Calu3 (cell line): ENCODE measurements at regions of chr2 and their contacts with region 1.

Region 1: DNA sequence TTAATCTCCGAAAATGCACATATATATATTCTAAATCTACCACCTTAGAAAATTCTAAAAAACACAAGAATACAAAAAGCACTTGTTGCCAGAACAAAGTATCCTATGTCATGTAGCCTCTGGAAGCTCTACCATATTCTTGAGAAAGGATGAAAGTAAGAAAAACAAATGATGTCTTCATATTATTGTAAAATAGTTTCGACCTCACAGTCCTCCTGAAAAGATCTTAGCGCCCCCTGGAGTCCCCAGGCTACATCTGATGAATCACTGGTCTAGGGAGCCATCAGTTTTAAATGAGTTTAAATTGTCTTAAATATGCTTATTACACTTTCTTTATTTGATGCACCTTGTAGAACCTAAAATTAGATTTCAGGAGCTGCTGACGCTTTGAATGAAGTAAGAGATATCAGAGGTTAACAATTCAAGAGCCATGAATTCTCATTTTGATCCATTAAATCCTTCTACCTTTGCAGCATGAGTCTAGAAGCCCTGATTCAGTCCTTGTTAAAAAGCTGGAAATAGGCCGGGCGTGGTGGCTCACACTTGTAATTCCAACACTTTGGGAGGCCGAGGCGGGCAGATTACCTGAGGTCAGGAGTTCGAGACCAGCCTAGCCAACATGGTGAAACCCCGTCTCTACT is 138.8 kb downstream of the MCFD2 start:
- DNase-seq: peak; percentile 71
- H3K4me3 Mint-ChIP-seq: no peak overlapping the region
- H3K27ac Mint-ChIP-seq: no peak overlapping the region
- H3K4me1 Mint-ChIP-seq: peaks cover 9% of the 10 kb centered on the region
- H3K27me3 Mint-ChIP-seq: peaks cover under 1% of the 10 kb centered on the region
- CTCF ChIP-seq: peak; percentile 71

Region 2: DNA sequence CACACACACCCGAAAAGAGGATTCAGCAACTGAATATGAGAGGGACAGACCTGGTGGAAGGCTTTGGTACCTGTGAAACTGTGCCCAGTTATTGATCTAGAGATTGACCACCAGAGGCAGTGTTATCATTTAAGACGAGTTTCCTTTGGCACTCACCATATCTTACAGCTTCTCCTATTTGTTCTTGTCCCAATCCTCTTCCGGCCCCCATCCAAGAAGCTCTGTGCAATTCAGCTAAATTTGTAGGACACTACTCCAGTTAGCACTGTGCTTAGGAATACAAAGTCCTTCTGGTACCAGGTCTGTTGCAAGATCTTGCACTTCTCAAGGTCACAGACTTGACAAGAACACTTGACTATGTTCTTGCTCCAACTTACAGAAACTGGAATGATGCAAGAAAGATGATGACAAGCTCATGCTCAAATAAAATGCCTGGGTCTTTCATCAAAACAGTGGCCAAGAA is 119.7 kb before region 1 on chr2:
- CTCF ChIA-PET with region 1: no interaction called
- intact Hi-C with region 1: loop called (anchors 1 kb)
- DNase-seq: no peak
- H3K4me3 Mint-ChIP-seq: no peak overlapping the region
- H3K27ac Mint-ChIP-seq: no peak overlapping the region
- H3K4me1 Mint-ChIP-seq: peaks cover 9% of the 10 kb centered on the region
- H3K27me3 Mint-ChIP-seq: peaks cover 10% of the 10 kb centered on the region
- CTCF ChIP-seq: peak; percentile 49

Region 3: GRCh38 chr2:46887028-46887885 is 110.5 kb after region 1 on chr2:
- CTCF ChIA-PET with region 1: no interaction called
- intact Hi-C with region 1: no loop called
- DNase-seq: no peak
- H3K4me3 Mint-ChIP-seq: no peak overlapping the region
- H3K27ac Mint-ChIP-seq: no peak overlapping the region
- H3K4me1 Mint-ChIP-seq: no peaks in the 10 kb centered on the region
- H3K27me3 Mint-ChIP-seq: peaks cover 26% of the 10 kb centered on the region
- CTCF ChIP-seq: no peak